PC-9 (cell line): ENCODE measurements at regions of chr17 and their contacts with region 1.

Region 1: GRCh38 chr17:78532922-78533640 is 44.1 kb downstream of the DNAH17 start:
- DNase-seq: peak; percentile 40 to 80
- H3K4me3 ChIP-seq: no peak overlapping the region
- H3K27ac ChIP-seq: peak overlapping the region; percentile 27; the same call in 1 of the 2 replicates
- H3K4me1 ChIP-seq: peaks cover 43% of the 10 kb centered on the region
- H3K27me3 ChIP-seq: no peaks in the 10 kb centered on the region
- CTCF ChIP-seq: no peak

Region 2: GRCh38 chr17:78089576-78090281 is 443.4 kb before region 1 on chr17:
- CTCF ChIA-PET with region 1: no interaction called
- POLR2A ChIA-PET with region 1: no interaction called
- intact Hi-C with region 1: no loop called
- DNase-seq: no peak
- H3K4me3 ChIP-seq: no peak overlapping the region
- H3K27ac ChIP-seq: no peak overlapping the region
- H3K4me1 ChIP-seq: no peaks in the 10 kb centered on the region
- H3K27me3 ChIP-seq: 0 out of 2 replicates have a peak, but pooled peaks cover 3% of the 10 kb centered on the region
- CTCF ChIP-seq: no peak

Region 3: GRCh38 chr17:78665952-78666920 is 133.2 kb after region 1 on chr17:
- CTCF ChIA-PET with region 1: no interaction called
- POLR2A ChIA-PET with region 1: no interaction called
- intact Hi-C with region 1: loop called (anchors 10 kb)
- DNase-seq: peak in 1 of 2 experiments; percentile 71
- H3K4me3 ChIP-seq: no peak overlapping the region
- H3K27ac ChIP-seq: no peak overlapping the region
- H3K4me1 ChIP-seq: peaks cover 9% of the 10 kb centered on the region
- H3K27me3 ChIP-seq: no peaks in the 10 kb centered on the region
- CTCF ChIP-seq: no peak

Region 4: GRCh38 chr17:78883164-78884122 is 350.4 kb after region 1 on chr17:
- CTCF ChIA-PET with region 1: no interaction called
- POLR2A ChIA-PET with region 1: no interaction called
- intact Hi-C with region 1: no loop called
- DNase-seq: peak; percentile 90 to 94
- H3K4me3 ChIP-seq: peak overlapping the region; percentile 39; the same call in 1 of the 2 replicates
- H3K27ac ChIP-seq: peak overlapping the region; percentile 93
- H3K4me1 ChIP-seq: peaks cover 48% of the 10 kb centered on the region
- H3K27me3 ChIP-seq: no peaks in the 10 kb centered on the region
- CTCF ChIP-seq: no peak